MCF 10A (cell line): ENCODE measurements at regions of chrX and their contacts with region 1.

Region 1: DNA sequence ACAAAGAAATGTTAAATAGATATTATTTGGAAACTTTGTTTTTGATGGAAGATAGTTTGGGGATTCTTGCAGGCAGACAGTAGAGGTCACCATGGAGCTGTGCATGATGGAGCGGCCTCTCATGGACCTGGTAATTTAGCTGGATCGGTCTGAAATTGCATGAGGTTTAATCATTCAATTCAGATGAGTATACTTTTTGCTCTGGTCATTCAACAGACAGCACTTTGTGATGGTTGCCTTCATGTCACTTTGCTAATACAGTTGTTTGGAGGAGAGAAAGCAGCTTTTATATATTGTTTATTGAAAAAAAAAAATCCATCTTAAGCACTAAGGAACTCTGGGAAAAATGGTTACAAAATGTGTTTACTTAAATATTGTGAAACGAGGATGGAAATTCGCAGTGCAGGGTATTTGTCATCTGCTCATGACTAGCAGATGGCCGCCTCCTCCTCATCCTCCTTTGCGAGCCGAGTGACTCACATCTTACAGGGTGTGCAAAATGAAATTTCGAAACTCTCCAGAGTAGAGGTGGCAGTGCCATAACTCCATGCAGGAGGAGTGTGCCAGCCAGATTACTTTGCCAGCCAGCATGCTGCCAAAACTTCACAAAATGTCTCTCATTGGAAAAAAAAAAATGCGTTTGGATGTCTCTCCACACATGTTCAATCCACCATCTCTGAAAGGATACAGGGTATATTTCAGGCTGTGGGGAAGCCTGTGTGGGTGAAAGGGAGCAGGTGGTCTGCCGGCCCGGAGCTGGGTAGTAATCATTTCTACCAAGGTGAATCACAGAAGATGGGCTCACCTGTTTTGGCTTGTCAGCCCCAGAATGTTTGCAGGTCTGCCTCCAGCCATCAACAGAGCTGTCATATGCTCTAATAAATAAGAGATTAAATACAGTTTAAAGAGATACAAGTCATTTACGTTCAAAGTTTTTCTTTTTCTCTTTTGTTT is 314.9 kb upstream of the DIPK2B start:
- DNase-seq: peak; percentile 98
- H3K4me3 Mint-ChIP-seq: peak overlapping the region; percentile 64
- H3K27ac Mint-ChIP-seq: peak overlapping the region; percentile 14
- H3K4me1 Mint-ChIP-seq: peaks cover 27% of the 10 kb centered on the region
- H3K27me3 Mint-ChIP-seq: peaks cover 18% of the 10 kb centered on the region
- CTCF ChIP-seq: peak; percentile 70

Region 2: DNA sequence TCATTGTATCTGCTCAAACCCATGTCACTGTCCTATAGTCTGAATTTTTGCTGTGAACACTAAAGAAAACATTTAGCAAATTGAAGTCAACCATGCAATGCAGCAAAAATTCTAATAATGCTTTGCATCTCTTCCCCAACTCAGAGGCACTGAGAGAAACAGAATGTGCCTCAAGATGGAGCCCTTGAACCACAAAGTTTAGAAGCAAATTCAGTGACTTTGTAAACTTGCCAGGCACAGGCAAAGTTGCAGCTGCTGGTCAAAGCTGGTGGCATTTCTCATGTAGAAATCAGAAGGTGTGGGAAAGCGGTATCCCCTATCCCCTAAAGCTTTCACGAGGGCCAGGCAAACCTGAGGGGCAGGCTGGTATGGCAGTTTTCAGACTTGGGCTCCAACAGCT is 193.2 kb before region 1 on chrX:
- CTCF ChIA-PET with region 1: interaction called, 16 read pairs
- POLR2A ChIA-PET with region 1: interaction called, 7 read pairs
- intact Hi-C with region 1: loop called (anchors 2 kb)
- DNase-seq: peak; percentile 77
- H3K4me3 Mint-ChIP-seq: no peak overlapping the region
- H3K27ac Mint-ChIP-seq: no peak overlapping the region
- H3K4me1 Mint-ChIP-seq: no peaks in the 10 kb centered on the region
- H3K27me3 Mint-ChIP-seq: peaks cover 68% of the 10 kb centered on the region
- CTCF ChIP-seq: peak; percentile 63

Region 3: GRCh38 chrX:45621376-45622041 is 106.0 kb after region 1 on chrX:
- CTCF ChIA-PET with region 1: interaction called, 10 read pairs
- POLR2A ChIA-PET with region 1: interaction called, 9 read pairs
- intact Hi-C with region 1: no loop called
- DNase-seq: peak; percentile 65
- H3K4me3 Mint-ChIP-seq: no peak overlapping the region
- H3K27ac Mint-ChIP-seq: peak overlapping the region; percentile 86
- H3K4me1 Mint-ChIP-seq: peaks cover 18% of the 10 kb centered on the region
- H3K27me3 Mint-ChIP-seq: peaks cover 28% of the 10 kb centered on the region
- CTCF ChIP-seq: no peak

Region 4: GRCh38 chrX:45769761-45770582 is 254.4 kb after region 1 on chrX:
- CTCF ChIA-PET with region 1: interaction called, 6 read pairs
- POLR2A ChIA-PET with region 1: interaction called, 42 read pairs
- intact Hi-C with region 1: loop called (anchors 2 kb)
- DNase-seq: peak; percentile 83
- H3K4me3 Mint-ChIP-seq: peak overlapping the region; percentile 74
- H3K27ac Mint-ChIP-seq: peak overlapping the region; percentile 85
- H3K4me1 Mint-ChIP-seq: peaks cover 2% of the 10 kb centered on the region
- H3K27me3 Mint-ChIP-seq: peaks cover 74% of the 10 kb centered on the region
- CTCF ChIP-seq: no peak

Region 5: GRCh38 chrX:45843518-45843917 is 328.0 kb after region 1 on chrX:
- CTCF ChIA-PET with region 1: no interaction called
- POLR2A ChIA-PET with region 1: no interaction called
- intact Hi-C with region 1: loop called (anchors 1 kb)
- DNase-seq: peak; percentile 46
- H3K4me3 Mint-ChIP-seq: no peak overlapping the region
- H3K27ac Mint-ChIP-seq: no peak overlapping the region
- H3K4me1 Mint-ChIP-seq: peaks cover 14% of the 10 kb centered on the region
- H3K27me3 Mint-ChIP-seq: peaks cover 20% of the 10 kb centered on the region
- CTCF ChIP-seq: peak; percentile 23

Region 6: DNA sequence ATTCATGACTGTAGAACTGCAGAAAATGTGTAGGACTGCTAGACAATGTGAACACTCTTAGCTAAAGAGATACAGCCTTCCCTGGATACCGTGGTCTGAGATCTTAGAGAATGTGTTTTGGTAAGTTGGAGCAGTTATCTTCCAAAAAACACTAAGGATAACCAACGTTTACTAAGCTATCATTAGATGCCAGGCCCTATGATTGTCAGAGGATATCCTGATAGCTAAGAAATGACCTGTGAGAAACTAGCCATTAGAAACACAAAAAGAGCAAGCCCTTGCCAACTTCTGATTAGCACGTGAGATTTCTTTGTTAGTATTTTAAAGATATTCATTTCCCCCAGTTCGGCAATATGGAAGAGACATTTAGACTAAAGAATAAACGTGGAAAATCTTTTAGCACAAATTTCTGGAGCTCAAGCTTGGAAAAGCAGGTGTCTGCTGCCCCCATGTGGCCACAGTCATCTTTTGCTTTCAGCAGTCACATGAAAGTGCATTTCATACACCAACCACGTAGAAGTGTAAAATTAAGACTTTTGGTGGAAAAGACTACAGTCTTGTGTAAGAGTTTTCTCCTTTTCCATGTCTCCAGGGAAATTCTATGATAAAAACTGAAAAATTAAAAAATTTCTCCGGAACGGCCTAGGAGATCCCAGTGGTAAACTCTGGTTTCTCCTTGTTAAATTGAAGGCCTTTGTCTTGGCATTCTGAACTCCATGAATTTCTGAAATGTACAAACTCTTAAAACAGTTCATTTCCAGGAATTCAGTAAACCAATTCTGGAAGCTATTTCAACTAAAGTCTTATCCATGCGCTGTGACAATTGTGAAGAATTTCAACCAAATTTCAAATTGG is 893.2 kb after region 1 on chrX:
- CTCF ChIA-PET with region 1: interaction called, 5 read pairs
- POLR2A ChIA-PET with region 1: interaction called, 8 read pairs
- intact Hi-C with region 1: loop called (anchors 2 kb)
- DNase-seq: peak; percentile 72
- H3K4me3 Mint-ChIP-seq: no peak overlapping the region
- H3K27ac Mint-ChIP-seq: no peak overlapping the region
- H3K4me1 Mint-ChIP-seq: no peaks in the 10 kb centered on the region
- H3K27me3 Mint-ChIP-seq: peaks cover 14% of the 10 kb centered on the region
- CTCF ChIP-seq: peak; percentile 80